Activated CD8-positive, alpha-beta T cell treated with anti-CD3 and anti-CD28 coated beads for 36 hours (primary cell): ENCODE measurements at regions of chr5 and their contacts with region 1.

Region 1: GRCh38 chr5:62326302-62326701 is 20.3 kb downstream of the KIF2A start:
- DNase-seq: no peak
- ATAC-seq: peak; percentile 48
- H3K4me3 Mint-ChIP-seq: no peak overlapping the region
- H3K27ac Mint-ChIP-seq: peak overlapping the region; percentile 36
- H3K4me1 Mint-ChIP-seq: peaks cover 76% of the 10 kb centered on the region
- H3K27me3 Mint-ChIP-seq: no peaks in the 10 kb centered on the region
- CTCF ChIP-seq: no peak

Region 2: GRCh38 chr5:62315376-62316175 is 10.7 kb before region 1 on chr5:
- CTCF ChIA-PET with region 1: interaction called, 5 read pairs
- POLR2A ChIA-PET with region 1: interaction called, 28 read pairs
- intact Hi-C with region 1: no loop called
- DNase-seq: no peak
- ATAC-seq: no peak
- H3K4me3 Mint-ChIP-seq: no peak overlapping the region
- H3K27ac Mint-ChIP-seq: peak overlapping the region; percentile 74
- H3K4me1 Mint-ChIP-seq: peaks cover 79% of the 10 kb centered on the region
- H3K27me3 Mint-ChIP-seq: no peaks in the 10 kb centered on the region
- CTCF ChIP-seq: no peak

Region 3: GRCh38 chr5:62708481-62709325 is 382.4 kb after region 1 on chr5:
- CTCF ChIA-PET with region 1: no interaction called
- POLR2A ChIA-PET with region 1: no interaction called
- intact Hi-C with region 1: no loop called
- DNase-seq: no peak
- ATAC-seq: no peak
- H3K4me3 Mint-ChIP-seq: no peak overlapping the region
- H3K27ac Mint-ChIP-seq: no peak overlapping the region
- H3K4me1 Mint-ChIP-seq: no peaks in the 10 kb centered on the region
- H3K27me3 Mint-ChIP-seq: no peaks in the 10 kb centered on the region
- CTCF ChIP-seq: no peak